ENCODE measurements at regions of chr3 and their contacts with region 1.

Region 1: GRCh38 chr3:48232734-48233133 is 8.2 kb upstream of the ZNF589 start:
- DNase-seq: peak; percentile 67 to 97 (median 84)

Region 2: GRCh38 chr3:48273594-48274211 is 41.0 kb after region 1 on chr3:
- intact Hi-C with region 1: loop called (anchors 5 kb)
- DNase-seq: peak in 4 of 10 donors; percentile 32 to 56 (median 46)